ENCODE measurements at regions of chr20 and their contacts with region 1.

Region 1: GRCh38 chr20:43963872-43964791 is 49.5 kb downstream of the TOX2 start:
- DNase-seq: peak; percentile 78
- H3K4me3 Mint-ChIP-seq: no peak overlapping the region
- H3K27ac Mint-ChIP-seq: peak overlapping the region; percentile 9
- H3K4me1 Mint-ChIP-seq: peaks cover 37% of the 10 kb centered on the region
- H3K27me3 Mint-ChIP-seq: peaks cover 25% of the 10 kb centered on the region

Region 2: DNA sequence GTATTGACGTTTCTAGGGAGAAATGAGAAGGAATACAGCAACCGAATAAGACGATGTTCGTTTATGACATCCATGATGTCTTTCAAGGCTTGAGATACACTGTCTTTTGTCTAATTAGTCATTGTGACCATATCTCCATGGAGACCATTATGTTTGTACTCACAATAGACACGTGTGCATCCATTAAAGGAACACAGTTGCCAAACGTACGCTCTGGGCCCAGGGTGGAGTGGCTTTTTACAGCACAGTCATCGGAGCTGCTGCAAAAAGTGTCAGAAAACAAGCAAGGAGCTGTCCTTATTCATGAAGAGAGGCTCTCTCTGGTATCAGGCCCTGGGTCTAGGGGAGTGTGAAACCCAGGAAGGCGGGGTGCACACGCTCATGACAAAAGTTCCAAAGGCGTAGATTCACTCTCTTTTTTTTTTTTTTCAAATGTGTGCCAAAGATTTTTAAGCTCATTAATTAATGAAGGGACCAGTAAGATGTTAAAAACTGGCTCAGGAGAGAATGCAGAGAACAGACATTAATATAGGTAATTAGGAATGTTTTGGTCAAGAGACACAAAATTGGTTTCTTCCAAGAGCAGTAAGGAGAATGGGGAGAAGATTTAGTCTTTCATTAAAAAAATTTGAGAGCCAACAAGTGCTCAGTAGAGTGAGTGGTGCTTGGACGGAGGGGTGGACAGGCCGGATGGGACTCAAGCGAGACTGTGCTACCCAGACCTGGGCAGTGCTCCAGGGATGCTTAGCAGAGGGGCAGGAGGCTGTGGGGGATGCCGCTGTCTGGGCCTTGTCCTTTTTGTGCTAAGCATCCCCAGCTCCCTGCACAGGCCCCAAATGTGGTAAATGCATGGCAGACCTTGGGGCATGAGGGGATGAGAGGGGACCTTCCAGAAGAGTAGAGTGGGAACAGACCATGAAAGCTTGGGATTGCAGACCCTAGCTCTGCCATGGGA is 202.5 kb before region 1 on chr20:
- CTCF ChIA-PET with region 1: no interaction called
- DNase-seq: no peak
- H3K4me3 Mint-ChIP-seq: no peak overlapping the region
- H3K27ac Mint-ChIP-seq: no peak overlapping the region
- H3K4me1 Mint-ChIP-seq: no peaks in the 10 kb centered on the region
- H3K27me3 Mint-ChIP-seq: peaks cover 11% of the 10 kb centered on the region

Region 3: DNA sequence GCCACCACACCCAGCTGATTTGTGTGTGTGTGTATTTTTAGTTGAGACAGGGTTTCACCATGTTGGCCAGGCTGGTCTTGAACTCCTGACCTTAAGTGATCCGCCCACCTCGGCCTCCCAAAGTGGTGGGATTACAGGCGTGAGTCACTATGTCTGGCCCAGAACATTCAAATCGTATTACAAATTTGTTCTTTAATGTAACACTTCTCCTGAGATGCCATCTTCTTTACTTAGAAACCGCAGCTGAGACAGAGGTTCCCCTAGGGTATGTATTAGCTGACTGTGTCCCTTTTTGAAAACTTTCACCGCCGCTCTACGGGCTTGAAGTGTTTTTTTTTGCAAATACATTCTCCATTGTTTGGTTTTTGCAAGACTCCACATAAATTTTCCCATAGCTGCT is 13.1 kb after region 1 on chr20:
- CTCF ChIA-PET with region 1: interaction called, 11 read pairs
- DNase-seq: no peak
- H3K4me3 Mint-ChIP-seq: no peak overlapping the region
- H3K27ac Mint-ChIP-seq: no peak overlapping the region
- H3K4me1 Mint-ChIP-seq: no peaks in the 10 kb centered on the region
- H3K27me3 Mint-ChIP-seq: peaks cover 41% of the 10 kb centered on the region

Measured in activated naive CD4-positive, alpha-beta T cell treated with anti-CD3 and anti-CD28 coated beads, Interleukin-2, amount 10 ng/mL, durations not matched to agents 7 days and 5 days (primary cell).